K562 (cell line): ENCODE measurements at regions of chr3 and their contacts with region 1.

Region 1: DNA sequence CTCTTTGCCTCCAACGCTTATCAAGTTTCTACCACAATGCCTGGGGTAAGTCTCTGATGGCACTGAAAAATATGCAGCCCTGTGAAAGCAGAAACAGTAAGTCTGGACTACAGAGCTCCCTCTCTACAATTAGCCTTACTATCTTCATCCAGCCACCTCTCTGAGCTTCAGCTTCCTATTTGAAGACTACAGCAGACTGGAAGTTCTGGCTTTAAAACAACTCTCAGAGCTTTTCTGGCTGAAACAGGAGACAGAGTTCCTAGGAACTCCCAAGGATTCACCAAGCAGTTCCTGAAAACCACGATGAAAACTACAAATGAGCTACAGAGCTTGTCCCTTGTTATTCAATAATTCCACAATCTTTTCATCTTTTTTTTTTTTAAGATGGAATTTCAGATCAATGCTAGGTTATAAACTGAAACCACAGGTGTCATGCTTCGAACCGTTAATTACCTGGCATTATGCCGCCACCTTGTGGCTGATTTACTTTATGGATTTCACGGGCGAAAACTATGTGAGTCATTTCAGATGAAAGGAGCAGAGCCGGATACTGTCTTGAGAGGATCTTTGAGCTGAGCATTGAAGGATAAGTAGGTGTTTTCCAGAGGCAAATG is 3.9 kb downstream of the CRYGS start:
- DNase-seq: peak; percentile 58 to 82 (median 63)
- ATAC-seq: peak; percentile 94
- H3K4me3 ChIP-seq: no peak overlapping the region
- H3K27ac ChIP-seq: no peak overlapping the region
- H3K4me1 ChIP-seq: peaks cover 0 to 7% of the 10 kb centered on the region in 2 experiments; a peak in 1 of 5 replicates
- H3K27me3 ChIP-seq: no peaks in the 10 kb centered on the region
- CTCF ChIP-seq: peak; percentile 63 to 90 (median 78)
- EP300 ChIP-seq: no peak
- POLR2A ChIP-seq: no peak
- RAD21 ChIP-seq: peak; percentile 80 to 82

Region 2: DNA sequence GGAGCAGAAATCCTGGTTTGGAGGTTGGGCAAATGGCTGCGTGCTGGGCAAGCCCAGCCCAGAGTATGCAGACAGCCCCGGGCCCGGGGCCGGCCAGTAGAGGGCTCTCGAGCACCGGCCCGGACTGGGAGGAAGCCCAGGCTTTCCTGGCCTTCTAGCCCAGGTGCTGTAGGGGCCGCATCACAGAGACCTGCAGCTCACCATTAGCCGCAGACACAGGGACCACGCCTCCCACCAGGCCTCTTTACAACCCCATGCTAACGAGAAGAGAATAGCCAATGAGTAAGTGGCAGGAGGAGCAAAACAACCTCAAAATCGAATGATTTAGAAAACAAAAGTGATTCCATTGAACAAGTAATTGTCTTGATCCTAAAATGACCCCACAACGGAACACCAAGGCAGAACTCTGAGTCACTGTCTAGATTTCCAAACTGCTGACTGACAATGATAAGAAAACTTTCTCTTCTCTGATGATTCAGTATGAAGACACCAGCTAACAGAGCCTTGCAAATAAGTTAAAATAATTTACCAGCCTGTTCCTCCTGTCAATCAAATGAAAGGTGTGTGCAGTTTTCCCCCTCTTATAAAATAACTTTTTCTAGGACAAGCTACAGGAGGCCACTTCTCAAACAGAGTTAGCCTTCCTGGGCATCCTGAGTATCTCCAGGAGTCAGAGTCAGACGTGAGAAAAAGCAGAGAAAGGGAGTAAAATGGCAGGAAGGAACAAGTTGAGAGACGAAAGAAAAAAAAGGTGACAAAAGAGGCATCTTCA is 280.5 kb before region 1 on chr3:
- CTCF ChIA-PET with region 1: interaction called, 14 read pairs
- POLR2A ChIA-PET with region 1: no interaction called
- in situ Hi-C with region 1: loop called (anchors 5 kb)
- intact Hi-C with region 1: loop called (anchors 2 kb)
- DNase-seq: peak; percentile 74 to 81 (median 78)
- ATAC-seq: peak; percentile 99
- H3K4me3 ChIP-seq: no peak overlapping the region
- H3K27ac ChIP-seq: no peak overlapping the region
- H3K4me1 ChIP-seq: peaks cover 4 to 7% of the 10 kb centered on the region in 2 experiments; a peak in 2 of 5 replicates
- H3K27me3 ChIP-seq: peaks cover 32 to 66% of the 10 kb centered on the region in 2 experiments
- CTCF ChIP-seq: peak; percentile 89 to 91 (median 90)
- EP300 ChIP-seq: peak; percentile 6; the same call in 1 of the 2 replicates
- POLR2A ChIP-seq: no peak
- RAD21 ChIP-seq: peak; percentile 65 to 84